ENCODE measurements at regions of chr12 and their contacts with region 1.

Region 1: DNA sequence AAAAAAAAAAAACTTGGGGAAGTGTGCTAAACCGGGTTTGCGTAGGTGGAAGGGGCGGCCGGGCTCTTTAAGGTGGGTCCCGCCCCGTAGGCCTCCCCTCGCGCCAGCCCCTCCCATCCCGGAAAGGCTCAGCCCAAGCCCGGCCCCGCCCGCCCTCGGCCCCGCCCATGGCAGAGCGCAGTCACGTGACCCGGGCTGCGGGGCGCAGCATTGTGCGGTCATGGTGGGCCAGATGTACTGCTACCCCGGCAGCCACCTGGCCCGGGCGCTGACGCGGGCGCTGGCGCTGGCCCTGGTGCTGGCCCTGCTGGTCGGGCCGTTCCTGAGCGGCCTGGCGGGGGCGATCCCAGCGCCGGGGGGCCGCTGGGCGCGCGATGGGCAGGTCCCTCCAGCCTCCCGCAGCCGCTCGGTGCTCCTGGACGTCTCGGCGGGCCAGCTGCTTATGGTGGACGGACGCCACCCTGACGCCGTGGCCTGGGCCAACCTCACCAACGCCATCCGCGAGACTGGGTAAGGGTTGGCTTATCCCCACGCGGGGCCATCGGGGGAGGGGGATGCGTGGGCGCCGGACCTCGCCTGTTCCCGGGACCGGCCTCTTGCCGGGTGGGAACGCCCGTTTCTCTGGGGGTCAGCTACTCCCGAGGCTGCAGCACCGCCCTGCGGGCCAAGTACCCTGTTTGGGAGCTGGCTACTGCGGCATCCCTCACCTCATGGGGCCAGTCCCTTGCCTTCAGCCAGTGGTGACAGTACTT is at the start of gene PLBD2:
- DNase-seq: peak; percentile 95 to 97 (median 95)
- ATAC-seq: peak; percentile 96 to 98 (median 96)
- H3K4me3 ChIP-seq: peak within 1 kb of the TSS; percentile 47 to 94 (median 78)
- H3K27ac ChIP-seq: peak within 1 kb of the TSS; percentile 47 to 93 (median 86)
- H3K4me1 ChIP-seq: peaks cover 0 to 38% (median 10%) of the 10 kb centered on the region in 12 donors
- H3K27me3 ChIP-seq: no peaks in the 10 kb centered on the region
- CTCF ChIP-seq: no peak
- POLR2A ChIP-seq: peak in 1 of 2 donors; percentile 81
- total RNA-seq, gene PLBD2: 28.8 to 66.6 (median 33.6) TPM

Region 2: GRCh38 chr12:113184900-113185773 is 173.4 kb before region 1 on chr12 and contains the starts of genes DDX54 and RITA1:
- intact Hi-C with region 1: loop called in 1 of 10 experiments (anchors 5 kb)
- DNase-seq: peak; percentile 89 to 94 (median 91)
- ATAC-seq: peak; percentile 78 to 93 (median 92)
- H3K4me3 ChIP-seq: peak within 1 kb of the TSS; percentile 73 to 100 (median 96)
- H3K27ac ChIP-seq: peak within 1 kb of the TSS; percentile 86 to 98 (median 95)
- H3K4me1 ChIP-seq: peaks cover 0 to 33% (median 21%) of the 10 kb centered on the region in 12 donors
- H3K27me3 ChIP-seq: no peaks in the 10 kb centered on the region
- CTCF ChIP-seq: no peak
- POLR2A ChIP-seq: peak in 1 of 2 donors; percentile 39
- total RNA-seq, gene DDX54: 28.2 to 60.2 (median 38.2) TPM
- total RNA-seq, gene RITA1: 13.3 to 30.7 (median 16.0) TPM

Region 3: DNA sequence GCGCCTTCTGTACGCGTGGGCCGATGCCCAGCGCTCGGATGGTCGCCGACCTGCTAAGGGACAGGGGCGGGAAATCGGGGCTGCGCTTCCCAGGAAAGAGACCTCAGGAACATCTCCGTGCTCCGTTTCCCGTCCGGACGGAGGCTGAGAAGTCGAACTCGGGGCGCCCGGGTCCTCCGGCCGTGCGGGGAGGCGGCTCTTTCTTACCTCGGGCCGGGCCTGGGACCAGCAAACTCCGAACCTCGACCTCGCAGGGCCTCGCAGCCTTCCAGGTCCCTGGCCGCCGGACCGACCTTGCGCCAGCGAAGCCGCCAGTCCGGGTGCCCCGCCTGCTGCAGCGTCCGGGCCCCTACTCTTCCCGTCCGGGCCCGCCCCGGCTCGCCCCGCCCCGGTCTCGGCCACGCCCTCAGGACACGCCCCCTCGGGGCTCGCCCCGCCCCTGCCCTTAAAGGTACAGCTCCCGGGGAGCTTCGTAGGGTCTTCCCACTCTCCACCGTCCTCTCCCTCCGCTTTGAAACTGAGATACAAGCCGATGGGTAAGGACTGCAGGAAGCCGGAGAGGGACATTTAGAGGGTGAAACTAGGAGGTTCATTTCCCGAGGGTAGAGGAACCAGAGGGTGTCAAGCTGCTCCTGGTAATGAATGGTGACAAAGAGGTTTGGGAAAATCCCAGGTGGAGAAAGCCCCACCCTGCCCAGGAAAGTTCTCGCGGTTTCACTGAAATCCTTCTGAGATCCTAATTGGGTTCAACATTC is 23.6 kb before region 1 on chr12 and contains the start of gene SLC8B1:
- intact Hi-C with region 1: loop called in 5 of 10 experiments (anchors 1 to 2 kb)
- DNase-seq: peak; percentile 88 to 96 (median 92)
- ATAC-seq: peak; percentile 95 to 100 (median 100)
- H3K4me3 ChIP-seq: peak within 1 kb of the TSS; percentile 55 to 98 (median 78)
- H3K27ac ChIP-seq: peak within 1 kb of the TSS in 11 of 12 donors; percentile 59 to 94 (median 76)
- H3K4me1 ChIP-seq: peaks cover 0 to 33% (median 16%) of the 10 kb centered on the region in 12 donors
- H3K27me3 ChIP-seq: no peaks in the 10 kb centered on the region
- CTCF ChIP-seq: no peak
- POLR2A ChIP-seq: peak in 1 of 2 donors; percentile 97
- total RNA-seq, gene SLC8B1: 9.7 to 33.2 (median 12.3) TPM

Measured in heart left ventricle (tissue), 16 donors.